ENCODE measurements at regions of chr7 and their contacts with region 1.

Region 1: GRCh38 chr7:2314209-2314955 is at the start of gene SNX8:
- DNase-seq: peak; percentile 99
- ATAC-seq: peak; percentile 77
- H3K4me3 Mint-ChIP-seq: no peak within 1 kb of the TSS
- H3K27ac Mint-ChIP-seq: peak within 1 kb of the TSS; percentile 98
- H3K4me1 Mint-ChIP-seq: peaks cover 47% of the 10 kb centered on the region
- H3K27me3 Mint-ChIP-seq: no peaks in the 10 kb centered on the region
- CTCF ChIP-seq: no peak
- total RNA-seq, gene SNX8: 175 and 181 TPM in 2 replicates

Region 2: DNA sequence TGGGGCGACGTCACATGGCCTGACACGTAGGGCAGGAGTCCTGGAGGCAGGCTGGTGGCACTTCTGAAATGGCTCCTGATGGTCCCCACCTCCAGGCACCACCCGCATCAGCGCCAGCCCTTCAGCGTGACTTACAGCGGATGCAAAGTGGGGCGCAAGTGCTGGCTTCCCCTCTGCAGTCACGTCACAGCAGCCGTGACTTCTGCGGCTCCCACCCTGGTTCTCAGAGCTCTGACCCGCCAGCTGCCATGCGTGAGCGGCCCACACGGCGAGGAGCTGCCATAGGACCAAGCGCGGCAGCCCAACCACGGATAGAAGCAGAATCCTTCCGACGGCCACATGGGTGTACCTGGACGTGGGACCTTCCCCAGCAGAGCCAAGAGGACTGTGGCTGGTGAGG is 485.3 kb before region 1 on chr7:
- CTCF ChIA-PET with region 1: no interaction called
- POLR2A ChIA-PET with region 1: no interaction called
- intact Hi-C with region 1: no loop called
- DNase-seq: no peak
- ATAC-seq: no peak
- H3K4me3 Mint-ChIP-seq: no peak overlapping the region
- H3K27ac Mint-ChIP-seq: no peak overlapping the region
- H3K4me1 Mint-ChIP-seq: no peaks in the 10 kb centered on the region
- H3K27me3 Mint-ChIP-seq: no peaks in the 10 kb centered on the region
- CTCF ChIP-seq: no peak

Region 3: DNA sequence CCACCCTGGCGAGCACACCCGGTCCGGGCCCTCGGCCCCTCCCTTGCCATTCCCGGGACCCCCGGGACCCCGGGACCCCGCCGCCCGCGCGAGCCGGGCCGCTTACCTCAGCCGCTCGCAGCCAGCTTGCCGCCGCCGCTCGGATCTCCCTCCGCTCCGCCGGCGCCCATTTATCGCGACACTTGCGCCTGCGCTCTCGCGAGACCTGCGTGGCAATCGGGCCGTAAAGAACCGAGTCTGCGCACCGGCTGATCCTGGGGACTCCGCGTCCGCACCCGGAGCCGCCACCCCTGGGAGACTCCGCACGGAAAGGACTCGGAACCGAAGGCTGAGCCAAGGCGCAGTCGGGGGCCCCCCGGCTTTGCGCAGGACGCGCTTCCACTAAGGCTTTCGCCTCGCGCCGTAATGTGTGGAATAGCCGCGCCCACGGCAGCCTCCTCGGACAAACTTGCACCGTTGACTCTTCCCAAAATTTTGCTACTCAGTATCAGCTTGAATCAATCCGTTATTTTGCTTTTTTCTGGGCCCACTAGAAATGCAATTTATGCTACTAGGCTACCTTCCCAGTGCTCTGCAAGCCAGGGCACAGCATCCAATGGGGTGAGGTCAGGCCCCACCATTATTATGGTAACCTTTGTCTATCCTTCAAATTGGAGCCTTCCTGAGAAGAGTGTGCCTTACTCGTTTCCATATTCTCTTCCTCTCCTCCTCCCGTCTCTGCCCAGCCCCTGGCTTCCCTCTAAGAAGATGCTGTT is 81.4 kb before region 1 on chr7 and contains the start of gene MAD1L1:
- CTCF ChIA-PET with region 1: no interaction called
- POLR2A ChIA-PET with region 1: interaction called, 18 read pairs
- intact Hi-C with region 1: loop called (anchors 1 kb)
- DNase-seq: peak; percentile 88
- ATAC-seq: peak; percentile 68
- H3K4me3 Mint-ChIP-seq: peak within 1 kb of the TSS; percentile 90
- H3K27ac Mint-ChIP-seq: peak within 1 kb of the TSS; percentile 81
- H3K4me1 Mint-ChIP-seq: peaks cover 61% of the 10 kb centered on the region
- H3K27me3 Mint-ChIP-seq: no peaks in the 10 kb centered on the region
- CTCF ChIP-seq: no peak
- total RNA-seq, gene MAD1L1: 54.6 and 65.7 TPM in 2 replicates

Region 4: DNA sequence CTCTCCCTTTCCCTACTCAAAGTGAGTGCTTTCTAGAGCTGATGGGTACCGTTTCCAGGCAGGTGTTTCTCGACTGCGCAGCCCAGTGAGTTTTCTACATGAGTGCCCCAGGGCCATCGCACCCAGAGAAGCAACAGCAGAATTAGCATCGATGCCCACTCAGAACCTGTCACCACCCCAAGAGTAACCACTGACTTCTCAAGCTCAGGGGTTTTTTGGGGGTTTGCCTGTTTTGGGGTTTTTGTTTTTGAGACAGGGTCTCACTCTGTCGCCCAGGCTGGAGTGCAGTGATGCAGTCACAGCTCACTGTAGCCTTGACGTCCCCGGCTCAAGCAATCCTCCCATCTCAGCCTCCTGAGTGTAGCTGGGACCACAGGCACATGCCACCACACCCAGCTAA is 25.9 kb before region 1 on chr7:
- CTCF ChIA-PET with region 1: interaction called, 4 read pairs
- POLR2A ChIA-PET with region 1: interaction called, 31 read pairs
- intact Hi-C with region 1: loop called (anchors 1 kb)
- DNase-seq: peak; percentile 34
- ATAC-seq: peak; percentile 89
- H3K4me3 Mint-ChIP-seq: peak overlapping the region; percentile 73
- H3K27ac Mint-ChIP-seq: peak overlapping the region; percentile 97
- H3K4me1 Mint-ChIP-seq: peaks cover 49% of the 10 kb centered on the region
- H3K27me3 Mint-ChIP-seq: no peaks in the 10 kb centered on the region
- CTCF ChIP-seq: no peak

Region 5: DNA sequence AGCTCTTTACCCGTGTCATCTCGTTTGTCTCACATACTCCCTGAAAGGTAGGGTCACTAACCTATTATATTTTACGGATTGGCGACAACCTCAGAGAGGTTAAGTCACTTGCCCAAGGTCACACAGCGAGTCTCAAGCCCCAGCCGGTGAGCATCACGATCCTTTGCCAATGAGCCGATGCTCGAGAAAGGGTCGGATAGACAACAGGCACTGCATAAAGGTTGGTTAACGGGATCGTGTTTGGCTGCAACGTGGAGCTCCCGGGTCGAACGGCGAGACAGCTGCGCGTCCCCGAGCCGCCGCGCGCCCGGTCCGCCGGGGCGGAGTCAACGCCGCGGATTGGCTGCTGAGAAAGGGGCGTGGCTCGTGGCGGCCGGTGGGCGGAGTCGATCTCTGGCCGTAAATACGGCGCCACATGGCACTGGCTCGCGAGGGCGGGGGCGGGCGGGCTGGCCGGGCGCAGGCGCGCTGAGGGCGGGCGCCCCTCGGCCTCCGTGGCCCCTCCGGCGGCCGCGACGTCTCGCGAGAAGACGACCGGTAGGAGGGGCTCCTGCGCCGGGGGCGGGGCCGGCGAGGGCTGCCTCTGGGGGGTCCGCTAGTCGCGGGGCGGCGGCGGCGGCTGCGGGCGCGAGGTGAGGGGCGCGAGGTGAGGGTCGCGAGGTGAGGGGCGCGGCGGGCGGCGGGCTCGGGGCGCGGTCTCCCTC is 88.8 kb after region 1 on chr7 and contains the start of gene CHST12:
- CTCF ChIA-PET with region 1: no interaction called
- POLR2A ChIA-PET with region 1: no interaction called
- intact Hi-C with region 1: loop called (anchors 1 kb)
- DNase-seq: peak; percentile 91
- ATAC-seq: peak; percentile 77
- H3K4me3 Mint-ChIP-seq: peak within 1 kb of the TSS; percentile 85
- H3K27ac Mint-ChIP-seq: peak within 1 kb of the TSS; percentile 93
- H3K4me1 Mint-ChIP-seq: peaks cover 47% of the 10 kb centered on the region
- H3K27me3 Mint-ChIP-seq: no peaks in the 10 kb centered on the region
- CTCF ChIP-seq: no peak
- total RNA-seq, gene CHST12: 10.3 and 14.4 TPM in 2 replicates